OCI-LY7 (cell line): ENCODE measurements at regions of chr5 and their contacts with region 1.

Region 1: DNA sequence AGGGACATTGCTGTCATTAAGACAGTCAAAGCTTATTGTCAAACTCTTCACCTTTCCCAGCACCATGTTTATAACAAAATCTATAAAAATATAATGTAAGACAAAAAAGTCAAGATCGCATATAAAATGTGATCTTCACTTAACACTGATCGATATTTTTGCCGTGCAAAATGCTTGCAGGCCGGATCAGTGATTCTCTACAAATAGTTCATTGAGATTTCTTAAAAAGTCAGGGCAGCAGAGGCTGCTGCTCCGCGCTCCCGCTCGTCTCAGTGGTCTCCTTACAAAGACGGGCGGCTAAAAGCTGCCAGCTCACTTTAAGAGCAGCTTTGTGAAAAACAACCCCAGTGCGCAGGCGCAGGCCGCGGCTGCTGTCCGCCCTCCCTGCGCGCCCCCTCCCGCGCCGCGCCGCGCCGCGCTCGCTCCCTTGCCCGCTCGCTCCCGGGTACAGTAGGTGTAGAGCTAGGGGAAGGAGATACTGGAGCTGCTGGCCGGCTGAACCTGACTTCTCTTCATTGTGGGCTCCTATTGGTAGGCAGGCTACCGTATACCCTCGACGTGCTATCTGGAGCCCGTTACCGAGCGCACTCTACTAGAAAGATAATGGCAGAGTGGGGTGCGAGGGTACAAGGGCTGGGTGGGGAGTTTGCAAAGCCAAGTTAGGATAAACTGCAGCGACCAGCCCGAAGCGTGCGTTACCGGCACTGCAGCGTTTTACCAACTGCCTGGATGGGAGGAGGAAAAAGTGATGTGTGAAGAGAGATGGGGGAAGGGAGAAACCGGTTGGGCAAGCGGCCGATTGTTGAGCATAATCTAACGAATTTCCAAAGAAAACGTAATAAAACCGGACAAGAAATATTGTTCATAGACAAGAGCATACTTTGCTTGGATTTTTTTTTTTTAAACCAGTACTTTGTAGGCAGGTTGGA is at the start of gene ARRDC3:
- DNase-seq: peak; percentile 96
- H3K4me3 ChIP-seq: peak within 1 kb of the TSS; percentile 95
- H3K27ac ChIP-seq: peak within 1 kb of the TSS; percentile 98
- H3K4me1 ChIP-seq: peaks cover 18% of the 10 kb centered on the region
- CTCF ChIP-seq: no peak
- total RNA-seq, gene ARRDC3: 30.6 TPM in 2 replicates

Region 2: GRCh38 chr5:90529194-90529938 is 853.9 kb before region 1 on chr5 and contains the start of gene LYSMD3:
- CTCF ChIA-PET with region 1: no interaction called
- POLR2A ChIA-PET with region 1: no interaction called
- intact Hi-C with region 1: loop called (anchors 5 kb)
- DNase-seq: peak; percentile 97
- H3K4me3 ChIP-seq: peak within 1 kb of the TSS; percentile 93
- H3K27ac ChIP-seq: peak within 1 kb of the TSS; percentile 57
- H3K4me1 ChIP-seq: peaks cover 30% of the 10 kb centered on the region
- CTCF ChIP-seq: no peak
- total RNA-seq, gene LYSMD3: 5.7 and 9.5 TPM in 2 replicates

Region 3: DNA sequence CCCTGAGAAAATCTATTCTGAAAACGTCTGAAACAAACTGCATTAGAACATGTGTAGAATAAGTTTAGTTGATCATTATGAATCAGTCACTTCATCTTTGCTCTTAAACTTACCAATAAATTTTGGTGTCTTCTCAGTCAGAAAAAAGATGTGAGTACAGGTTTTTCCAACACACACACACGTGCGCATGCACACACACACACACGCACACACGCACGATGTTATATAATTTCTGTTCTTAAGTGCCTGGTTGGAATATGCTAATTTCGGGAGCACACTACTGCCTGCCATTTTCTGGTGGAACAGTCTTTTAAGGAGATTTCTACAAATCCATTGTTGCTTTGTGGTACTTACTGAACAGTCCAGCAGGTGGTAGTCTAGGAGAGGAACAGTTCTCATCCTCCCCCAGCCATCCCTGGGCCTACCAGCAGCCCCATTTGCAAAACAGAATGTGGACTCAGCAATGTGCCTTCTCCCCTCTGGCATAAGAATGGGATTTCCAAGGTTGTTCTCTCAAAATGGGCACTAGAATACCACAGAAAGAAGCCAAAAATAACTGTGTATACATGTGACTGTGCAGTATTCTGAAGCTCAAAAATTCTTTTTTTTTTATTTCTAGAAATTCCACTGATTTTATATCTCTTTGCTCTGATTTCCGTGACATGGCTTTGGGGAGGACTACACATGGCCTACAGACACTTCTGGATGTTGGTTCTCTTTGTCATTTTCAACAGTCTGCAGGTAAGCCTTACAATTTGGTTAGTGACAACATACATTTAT is 281.5 kb before region 1 on chr5:
- CTCF ChIA-PET with region 1: no interaction called
- POLR2A ChIA-PET with region 1: no interaction called
- intact Hi-C with region 1: loop called (anchors 2 kb)
- DNase-seq: peak; percentile 56
- H3K4me3 ChIP-seq: no peak overlapping the region
- H3K27ac ChIP-seq: no peak overlapping the region
- H3K4me1 ChIP-seq: no peaks in the 10 kb centered on the region
- CTCF ChIP-seq: peak; percentile 77

Region 4: GRCh38 chr5:91311697-91312501 is 71.4 kb before region 1 on chr5:
- CTCF ChIA-PET with region 1: no interaction called
- POLR2A ChIA-PET with region 1: interaction called, 16 read pairs
- intact Hi-C with region 1: loop called (anchors 2 kb)
- DNase-seq: peak; percentile 82
- H3K4me3 ChIP-seq: peak overlapping the region; percentile 33
- H3K27ac ChIP-seq: peak overlapping the region; percentile 52
- H3K4me1 ChIP-seq: peaks cover 59% of the 10 kb centered on the region
- CTCF ChIP-seq: peak; percentile 59

Region 5: DNA sequence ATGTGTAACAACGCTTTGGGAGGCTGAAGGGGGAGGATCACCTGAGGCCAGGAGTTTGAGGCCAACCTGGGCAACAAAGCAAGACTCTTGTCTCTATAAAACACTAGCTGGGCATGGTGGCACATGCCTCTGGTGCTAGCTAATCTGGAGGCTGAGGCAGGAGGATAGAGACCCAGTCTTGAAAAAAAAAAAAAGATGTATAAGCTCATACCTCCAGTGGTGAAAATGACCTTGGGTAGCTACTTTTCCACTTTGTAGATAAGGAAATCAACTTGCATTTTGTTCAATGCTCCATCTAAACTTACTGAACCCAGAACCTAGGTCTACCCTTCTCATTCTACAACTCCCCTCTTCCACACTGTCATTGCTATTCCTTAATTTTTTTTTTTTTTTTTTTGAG is 16.7 kb before region 1 on chr5:
- CTCF ChIA-PET with region 1: no interaction called
- POLR2A ChIA-PET with region 1: interaction called, 11 read pairs
- intact Hi-C with region 1: loop called (anchors 2 kb)
- DNase-seq: no peak
- H3K4me3 ChIP-seq: no peak overlapping the region
- H3K27ac ChIP-seq: no peak overlapping the region
- H3K4me1 ChIP-seq: peaks cover 5% of the 10 kb centered on the region
- CTCF ChIP-seq: no peak